Kidney (tissue), 22 donors: ENCODE measurements at regions of chr1 and their contacts with region 1.

Region 1: DNA sequence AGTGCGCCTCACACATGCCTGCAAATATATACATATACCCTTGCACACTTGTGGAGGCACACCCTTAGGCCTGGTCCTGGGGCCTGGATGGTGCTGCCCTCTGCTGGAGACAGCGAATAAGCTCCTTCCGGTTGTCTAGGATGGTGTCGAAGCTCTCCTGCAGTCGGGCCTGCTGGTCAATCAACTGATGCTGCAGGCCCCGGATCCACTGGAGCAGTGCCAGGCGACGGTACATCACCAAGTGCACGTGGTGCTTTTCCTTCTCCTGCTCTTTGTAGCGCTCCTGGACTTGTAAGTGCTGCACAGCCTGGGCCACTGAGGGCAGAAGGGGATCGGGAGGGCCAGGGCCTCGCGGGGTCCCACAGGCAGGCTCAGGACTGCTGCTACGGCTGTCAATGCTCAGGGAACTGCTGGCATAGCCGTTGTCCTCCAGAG is 3.1 kb downstream of the C1orf216 start:
- DNase-seq: peak; percentile 69 to 85 (median 76)
- H3K4me3 ChIP-seq: no peak overlapping the region
- H3K27ac ChIP-seq: no peak overlapping the region
- H3K4me1 ChIP-seq: peaks cover 0 to 11% (median 0%) of the 10 kb centered on the region in 3 donors
- H3K27me3 ChIP-seq: no peaks in the 10 kb centered on the region
- CTCF ChIP-seq: peak; percentile 72

Region 2: DNA sequence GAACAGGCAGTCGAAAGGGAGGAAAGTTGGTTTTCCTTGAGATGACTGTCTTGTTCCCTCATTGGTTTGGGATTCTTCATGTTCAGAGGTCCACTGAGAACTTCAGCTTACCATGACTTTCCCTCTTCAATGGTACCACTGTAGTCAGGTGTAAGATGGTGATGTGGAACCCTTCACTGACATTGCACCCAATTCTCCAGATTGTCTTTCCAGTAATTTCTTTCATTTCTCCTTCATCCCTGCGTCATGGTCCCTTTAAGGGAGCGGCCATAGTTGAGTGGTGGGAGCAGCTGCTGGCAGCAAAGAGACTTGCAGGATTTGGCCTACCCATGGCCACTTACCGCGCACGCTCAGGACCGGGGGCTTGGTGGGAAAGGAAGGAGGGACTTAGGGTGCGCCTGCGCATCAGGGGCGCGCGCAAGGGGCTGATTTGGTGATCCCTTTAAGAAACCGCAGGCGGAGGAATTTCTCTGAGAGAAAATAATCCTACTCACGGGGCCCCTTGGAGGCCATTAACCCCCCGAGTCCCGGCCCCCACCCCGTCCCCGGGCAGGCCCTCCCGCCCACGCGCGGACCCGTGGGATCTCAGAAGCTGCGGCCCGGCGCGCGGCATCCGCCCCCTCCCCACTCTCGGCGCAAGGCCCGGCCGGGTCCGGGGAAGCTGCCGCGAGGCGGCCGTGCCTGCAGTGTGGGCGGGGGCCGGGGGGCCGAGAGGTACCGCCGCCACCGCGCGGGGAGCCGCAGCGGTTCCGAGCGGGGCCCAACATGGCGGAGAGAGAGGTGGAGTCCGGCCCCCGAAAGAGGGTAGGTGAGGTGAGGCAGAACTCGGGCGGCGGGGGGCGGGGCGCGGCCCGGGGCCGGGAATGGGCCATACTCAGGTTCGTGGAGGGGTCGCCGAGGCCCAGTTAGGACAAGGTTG is 447.0 kb before region 1 on chr1 and contains the start of gene ZMYM4:
- intact Hi-C with region 1: no loop called
- DNase-seq: peak; percentile 96 to 99 (median 98)
- H3K4me3 ChIP-seq: peak within 1 kb of the TSS; percentile 89 to 92 (median 91)
- H3K27ac ChIP-seq: peak within 1 kb of the TSS; percentile 63 to 67
- H3K4me1 ChIP-seq: peaks cover 0 to 8% (median 5%) of the 10 kb centered on the region in 3 donors
- H3K27me3 ChIP-seq: no peaks in the 10 kb centered on the region
- CTCF ChIP-seq: no peak
- total RNA-seq, gene ZMYM4: 64.4 TPM

Region 3: GRCh38 chr1:35573198-35574090 is 142.1 kb before region 1 on chr1 and contains the start of gene TFAP2E:
- intact Hi-C with region 1: loop called (anchors 5 kb)
- DNase-seq: peak in 4 of 5 donors; percentile 62 to 81 (median 70)
- H3K4me3 ChIP-seq: peak within 1 kb of the TSS; percentile 17 to 32 (median 28)
- H3K27ac ChIP-seq: no peak within 1 kb of the TSS
- H3K4me1 ChIP-seq: peaks cover 0 to 15% (median 0%) of the 10 kb centered on the region in 3 donors
- H3K27me3 ChIP-seq: peaks cover 38% of the 10 kb centered on the region
- CTCF ChIP-seq: no peak
- total RNA-seq, gene TFAP2E: 1.0 TPM

Region 4: DNA sequence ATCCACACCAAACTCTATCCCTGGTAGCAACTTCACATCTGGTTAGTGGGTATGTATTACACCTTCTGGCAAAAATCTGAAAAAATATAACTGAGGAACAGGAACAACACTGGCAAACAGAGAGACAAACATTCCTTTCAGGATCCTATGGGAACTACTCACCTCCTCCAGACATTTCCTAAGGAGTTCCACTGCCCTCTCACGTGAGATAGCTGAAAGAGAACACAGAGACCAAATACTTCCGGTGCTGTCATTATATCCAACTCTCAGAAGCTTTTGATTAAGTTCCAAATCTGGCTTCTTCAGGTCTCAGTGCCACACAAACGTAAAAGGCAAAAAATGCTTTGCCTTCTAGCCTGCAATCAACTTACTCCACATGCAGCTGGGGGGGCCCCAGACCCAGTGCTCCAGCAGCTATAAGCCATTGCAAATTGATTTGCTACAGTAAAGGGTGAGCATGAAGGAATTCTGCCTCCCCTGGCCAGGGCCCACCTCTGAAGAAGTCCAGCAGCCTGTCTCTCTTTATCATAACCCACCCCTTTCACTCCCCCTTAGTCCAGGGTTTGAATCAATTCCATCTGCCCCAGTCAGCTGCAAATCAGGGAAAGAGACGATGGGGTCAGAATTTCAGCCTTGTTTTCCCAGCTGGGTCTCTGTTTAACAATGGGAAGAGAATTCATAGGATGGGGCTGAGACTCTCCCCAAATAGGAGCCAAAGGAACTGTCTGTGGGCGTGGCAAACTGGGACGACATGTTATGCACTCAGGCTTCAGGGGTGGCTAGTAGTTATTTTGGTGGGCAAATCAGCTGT is 110.3 kb before region 1 on chr1:
- intact Hi-C with region 1: no loop called
- DNase-seq: no peak
- H3K4me3 ChIP-seq: no peak overlapping the region
- H3K27ac ChIP-seq: no peak overlapping the region
- H3K4me1 ChIP-seq: no peaks in the 10 kb centered on the region
- H3K27me3 ChIP-seq: no peaks in the 10 kb centered on the region
- CTCF ChIP-seq: no peak

Region 5: DNA sequence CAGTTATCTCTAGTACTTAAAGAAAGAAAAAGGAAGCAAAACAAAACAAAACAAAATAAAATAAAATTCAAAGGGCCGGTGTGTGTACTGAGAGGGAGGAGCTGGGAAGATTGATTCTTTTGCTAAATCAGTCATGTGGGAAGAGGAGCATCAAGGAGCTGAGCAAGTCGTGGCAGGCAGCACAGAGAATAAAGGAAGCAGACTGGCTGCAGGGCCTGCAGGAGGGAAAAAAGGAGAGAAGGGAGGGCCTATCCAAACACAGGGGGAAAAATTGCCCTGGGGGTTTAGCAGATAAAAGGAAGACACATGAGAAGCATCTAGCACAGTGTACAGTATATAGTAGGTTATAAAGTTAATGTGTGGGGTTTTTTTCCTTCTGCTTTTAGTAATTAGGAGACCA is 119.8 kb after region 1 on chr1:
- intact Hi-C with region 1: no loop called
- DNase-seq: peak in 3 of 5 donors; percentile 22 to 31 (median 24)
- H3K4me3 ChIP-seq: no peak overlapping the region
- H3K27ac ChIP-seq: no peak overlapping the region
- H3K4me1 ChIP-seq: no peaks in the 10 kb centered on the region
- H3K27me3 ChIP-seq: no peaks in the 10 kb centered on the region
- CTCF ChIP-seq: no peak